ENCODE measurements at regions of chr4 and their contacts with region 1.

Region 1: GRCh38 chr4:70183168-70183939 is 12.2 kb upstream of the ODAM start:
- DNase-seq: peak; percentile 35
- ATAC-seq: peak; percentile 91
- H3K4me3 Mint-ChIP-seq: no peak overlapping the region
- H3K27ac Mint-ChIP-seq: no peak overlapping the region
- H3K4me1 Mint-ChIP-seq: 0 out of 2 replicates have a peak, but pooled peaks cover under 1% of the 10 kb centered on the region
- H3K27me3 Mint-ChIP-seq: no peaks in the 10 kb centered on the region; the same call in 1 of the 2 replicates
- CTCF ChIP-seq: peak; percentile 61

Region 2: GRCh38 chr4:69896530-69897116 is 286.7 kb before region 1 on chr4:
- CTCF ChIA-PET with region 1: interaction called, 21 read pairs
- POLR2A ChIA-PET with region 1: no interaction called
- DNase-seq: no peak
- ATAC-seq: peak; percentile 39; the same call in 1 of the 2 replicates
- H3K4me3 Mint-ChIP-seq: no peak overlapping the region
- H3K27ac Mint-ChIP-seq: no peak overlapping the region
- H3K4me1 Mint-ChIP-seq: no peaks in the 10 kb centered on the region
- H3K27me3 Mint-ChIP-seq: no peaks in the 10 kb centered on the region; the same call in 1 of the 2 replicates
- CTCF ChIP-seq: peak; percentile 38; the same call in 1 of the 2 replicates

Region 3: GRCh38 chr4:70197842-70198241 is 14.5 kb after region 1 on chr4:
- CTCF ChIA-PET with region 1: interaction called, 13 read pairs
- POLR2A ChIA-PET with region 1: no interaction called
- DNase-seq: no peak
- ATAC-seq: peak; percentile 74
- H3K4me3 Mint-ChIP-seq: no peak overlapping the region
- H3K27ac Mint-ChIP-seq: peak overlapping the region; percentile 41
- H3K4me1 Mint-ChIP-seq: peaks cover 7% of the 10 kb centered on the region
- H3K27me3 Mint-ChIP-seq: no peaks in the 10 kb centered on the region
- CTCF ChIP-seq: no peak

Region 4: DNA sequence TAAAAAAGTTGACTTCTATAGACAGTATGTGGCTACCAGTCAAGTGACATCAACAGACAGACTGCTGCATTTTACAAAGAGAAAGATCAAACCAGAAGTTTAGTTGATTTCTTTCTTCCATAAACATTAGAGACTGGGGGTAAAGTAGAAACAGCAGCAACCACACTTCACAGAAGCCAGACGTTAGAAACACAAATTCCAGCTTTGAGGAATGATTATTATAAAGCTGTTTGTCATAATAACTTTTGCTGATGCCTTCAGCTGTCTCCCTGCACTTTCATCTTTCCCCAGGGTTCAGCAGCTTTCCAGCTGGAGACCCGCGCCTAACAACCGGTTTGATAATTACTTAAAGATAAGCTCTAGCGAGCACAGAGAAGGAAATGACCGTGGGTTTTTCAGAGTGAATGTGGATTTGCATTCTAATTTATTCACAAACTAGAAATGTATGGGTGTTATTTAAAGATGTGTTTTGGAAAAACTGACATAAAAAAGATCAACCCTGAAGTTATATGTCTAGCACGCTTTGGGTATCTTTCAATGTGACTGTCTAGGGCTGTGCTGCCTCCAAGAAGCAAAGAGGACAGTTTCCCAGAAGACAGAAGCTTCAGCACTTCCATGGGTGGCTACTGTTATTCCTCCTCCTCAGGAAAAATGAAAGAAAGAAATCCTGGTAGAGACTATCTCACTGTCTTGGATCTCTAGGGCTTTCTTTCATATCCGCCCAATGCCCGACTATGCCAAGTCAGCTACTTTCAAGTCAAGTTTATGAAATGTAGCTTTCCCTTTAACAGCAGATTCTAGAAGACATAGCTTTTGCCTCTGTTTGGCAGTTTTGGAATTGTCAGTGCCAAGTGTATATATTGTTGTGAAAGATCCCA is 430.2 kb after region 1 on chr4:
- CTCF ChIA-PET with region 1: no interaction called
- POLR2A ChIA-PET with region 1: no interaction called
- DNase-seq: no peak
- ATAC-seq: no peak
- H3K4me3 Mint-ChIP-seq: no peak overlapping the region
- H3K27ac Mint-ChIP-seq: no peak overlapping the region
- H3K4me1 Mint-ChIP-seq: peaks cover under 1% of the 10 kb centered on the region
- H3K27me3 Mint-ChIP-seq: no peaks in the 10 kb centered on the region
- CTCF ChIP-seq: no peak